Heart right ventricle (tissue), 16 donors: ENCODE measurements at regions of chr9 and their contacts with region 1.

Region 1: DNA sequence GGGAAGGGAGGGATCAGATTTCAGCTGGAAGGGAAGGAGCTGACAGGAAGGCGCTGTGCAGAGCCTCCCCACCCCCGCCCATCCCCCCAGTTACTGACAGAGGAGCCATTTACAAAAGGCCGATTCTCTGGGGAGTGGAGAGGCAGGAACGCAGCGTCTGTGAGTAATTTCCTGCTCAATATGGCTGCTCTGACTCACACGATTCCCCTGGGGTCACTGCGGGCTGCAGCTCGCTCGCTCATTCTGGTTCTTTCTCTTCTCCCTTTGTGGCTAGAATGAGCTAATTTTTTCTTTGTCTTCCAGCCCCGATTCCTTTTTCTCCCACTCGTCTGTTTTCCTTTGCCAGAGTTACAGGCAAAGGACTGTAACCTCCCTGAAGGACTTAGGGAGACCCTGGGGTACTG is 28.8 kb downstream of the PTPA start:
- DNase-seq: peak; percentile 89 to 99
- ATAC-seq: peak; percentile 69 to 84 (median 77)
- H3K4me3 ChIP-seq: peak overlapping the region; percentile 37 to 62 (median 54)
- H3K27ac ChIP-seq: peak overlapping the region; percentile 100
- H3K4me1 ChIP-seq: peaks cover 49 to 79% (median 71%) of the 10 kb centered on the region in 9 donors
- H3K27me3 ChIP-seq: no peaks in the 10 kb centered on the region
- CTCF ChIP-seq: no peak

Region 2: DNA sequence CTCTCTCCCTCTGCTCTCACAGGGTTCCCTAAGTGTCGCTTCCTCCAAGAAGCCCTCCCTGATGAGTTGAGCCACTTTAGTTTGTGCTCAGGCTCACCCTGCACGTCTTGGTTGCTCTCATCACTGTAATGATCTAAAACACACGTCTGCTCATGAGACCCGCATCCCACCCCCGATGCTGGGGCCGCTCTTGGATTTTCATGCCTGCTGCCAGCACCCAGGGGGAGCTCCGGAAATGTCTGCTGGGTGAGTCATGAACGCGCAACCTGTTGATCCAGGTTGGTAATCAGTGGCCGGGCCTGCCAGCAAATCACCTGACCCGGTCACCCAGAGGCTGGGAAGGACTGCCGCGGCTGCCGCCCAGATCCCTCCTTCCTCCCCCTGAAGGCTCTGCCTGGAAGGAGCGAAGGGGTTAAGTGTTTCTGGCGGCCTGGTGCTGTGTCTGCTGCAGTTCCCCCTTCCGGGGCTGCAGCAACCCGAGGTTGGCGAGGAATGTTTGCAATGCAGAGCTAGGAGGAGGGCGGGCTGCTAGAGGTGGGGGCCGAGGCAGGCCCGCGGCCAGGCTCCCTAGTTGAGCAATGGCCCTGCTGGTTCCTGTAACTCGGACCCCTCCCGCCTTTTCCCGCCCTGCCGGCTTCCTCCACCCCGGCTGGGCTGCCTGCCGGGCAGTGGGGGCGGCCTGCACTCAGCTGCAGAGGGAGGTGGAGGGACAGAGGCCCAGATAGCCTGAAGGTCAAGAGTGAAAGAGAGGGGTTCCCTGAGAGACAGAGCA is 194.1 kb after region 1 on chr9:
- intact Hi-C with region 1: loop called in 1 of 10 experiments (anchors 5 kb)
- DNase-seq: peak; percentile 88 to 89
- ATAC-seq: peak; percentile 87 to 95 (median 91)
- H3K4me3 ChIP-seq: peak overlapping the region in 8 of 10 donors; percentile 2 to 39 (median 29)
- H3K27ac ChIP-seq: peak overlapping the region; percentile 69 to 96 (median 88)
- H3K4me1 ChIP-seq: peaks cover 19 to 60% (median 53%) of the 10 kb centered on the region in 9 donors
- H3K27me3 ChIP-seq: no peaks in the 10 kb centered on the region
- CTCF ChIP-seq: peak in 4 of 9 donors; percentile 7 to 22 (median 11)

Region 3: GRCh38 chr9:129482521-129483414 is 342.8 kb after region 1 on chr9:
- intact Hi-C with region 1: loop called in 3 of 10 experiments (anchors 2 to 5 kb)
- DNase-seq: peak; percentile 84 to 93
- ATAC-seq: peak; percentile 49 to 83 (median 64)
- H3K4me3 ChIP-seq: peak overlapping the region; percentile 34 to 71 (median 62)
- H3K27ac ChIP-seq: peak overlapping the region; percentile 98 to 100 (median 100)
- H3K4me1 ChIP-seq: peaks cover 37 to 87% (median 64%) of the 10 kb centered on the region in 9 donors
- H3K27me3 ChIP-seq: no peaks in the 10 kb centered on the region
- CTCF ChIP-seq: peak in 3 of 9 donors; percentile 13 to 42 (median 29)

Region 4: DNA sequence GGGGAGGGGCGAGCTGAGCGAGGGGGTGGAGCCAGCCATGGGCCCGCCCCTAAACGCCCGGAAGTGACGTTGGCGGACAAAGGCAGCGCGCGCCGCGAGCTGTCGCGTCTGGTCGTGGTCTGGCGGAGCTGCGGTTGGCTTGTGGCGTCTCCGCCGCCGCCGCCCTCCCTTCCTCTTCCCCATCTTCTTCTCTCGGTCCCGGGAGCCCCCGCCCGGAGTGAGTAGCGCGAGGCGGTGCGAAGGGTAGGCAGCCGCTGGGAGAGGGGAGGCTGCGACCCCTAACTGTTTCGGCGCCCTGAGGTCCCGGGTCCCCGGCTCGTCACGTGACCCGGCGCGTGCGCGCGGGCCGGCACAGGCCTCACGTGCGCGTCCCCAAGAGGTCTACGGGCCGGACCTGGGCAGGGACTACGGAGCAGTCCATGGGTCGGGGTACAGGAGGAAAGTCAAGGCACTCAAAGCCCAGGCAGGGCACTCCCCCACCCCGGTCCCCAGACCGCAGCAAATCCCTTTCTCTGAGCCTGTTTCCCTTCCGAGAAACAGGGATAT is 486.2 kb after region 1 on chr9 and contains the start of gene NTMT1:
- intact Hi-C with region 1: loop called in 1 of 10 experiments (anchors 5 kb)
- DNase-seq: peak; percentile 85 to 90
- ATAC-seq: peak; percentile 91 to 95 (median 94)
- H3K4me3 ChIP-seq: peak within 1 kb of the TSS; percentile 58 to 90 (median 79)
- H3K27ac ChIP-seq: peak within 1 kb of the TSS; percentile 79 to 98 (median 94)
- H3K4me1 ChIP-seq: peaks cover 19 to 61% (median 53%) of the 10 kb centered on the region in 9 donors
- H3K27me3 ChIP-seq: peaks cover 0 to 9% (median 0%) of the 10 kb centered on the region in 7 donors
- CTCF ChIP-seq: no peak
- total RNA-seq, gene NTMT1: 54.0 to 84.2 (median 61.9) TPM

Region 5: GRCh38 chr9:129783516-129784361 is 643.7 kb after region 1 on chr9:
- intact Hi-C with region 1: loop called in 3 of 10 experiments (anchors 10 kb)
- DNase-seq: peak; percentile 33 to 75
- ATAC-seq: peak; percentile 83 to 96 (median 93)
- H3K4me3 ChIP-seq: no peak overlapping the region
- H3K27ac ChIP-seq: no peak overlapping the region
- H3K4me1 ChIP-seq: peaks cover 0 to 6% (median 0%) of the 10 kb centered on the region in 9 donors
- H3K27me3 ChIP-seq: peaks cover 0 to 17% (median 8%) of the 10 kb centered on the region in 7 donors
- CTCF ChIP-seq: peak; percentile 89 to 94 (median 92)